B cell (primary cell): ENCODE measurements at regions of chr20 and their contacts with region 1.

Region 1: GRCh38 chr20:324177-325044 is 941 bp upstream of the SOX12 start:
- DNase-seq: peak; percentile 95
- ATAC-seq: peak; percentile 57
- H3K4me3 ChIP-seq: peak overlapping the region; percentile 58 to 95 (median 79)
- H3K4me3 Mint-ChIP-seq: peak overlapping the region; percentile 95
- H3K27ac ChIP-seq: peak overlapping the region; percentile 65 to 89
- H3K27ac Mint-ChIP-seq: peak overlapping the region; percentile 95
- H3K4me1 ChIP-seq: peaks cover 15 to 29% of the 10 kb centered on the region in 2 donors
- H3K4me1 Mint-ChIP-seq: peaks cover 26% of the 10 kb centered on the region
- H3K27me3 ChIP-seq: no peaks in the 10 kb centered on the region
- H3K27me3 Mint-ChIP-seq: no peaks in the 10 kb centered on the region
- CTCF ChIP-seq: peak; percentile 56

Region 2: DNA sequence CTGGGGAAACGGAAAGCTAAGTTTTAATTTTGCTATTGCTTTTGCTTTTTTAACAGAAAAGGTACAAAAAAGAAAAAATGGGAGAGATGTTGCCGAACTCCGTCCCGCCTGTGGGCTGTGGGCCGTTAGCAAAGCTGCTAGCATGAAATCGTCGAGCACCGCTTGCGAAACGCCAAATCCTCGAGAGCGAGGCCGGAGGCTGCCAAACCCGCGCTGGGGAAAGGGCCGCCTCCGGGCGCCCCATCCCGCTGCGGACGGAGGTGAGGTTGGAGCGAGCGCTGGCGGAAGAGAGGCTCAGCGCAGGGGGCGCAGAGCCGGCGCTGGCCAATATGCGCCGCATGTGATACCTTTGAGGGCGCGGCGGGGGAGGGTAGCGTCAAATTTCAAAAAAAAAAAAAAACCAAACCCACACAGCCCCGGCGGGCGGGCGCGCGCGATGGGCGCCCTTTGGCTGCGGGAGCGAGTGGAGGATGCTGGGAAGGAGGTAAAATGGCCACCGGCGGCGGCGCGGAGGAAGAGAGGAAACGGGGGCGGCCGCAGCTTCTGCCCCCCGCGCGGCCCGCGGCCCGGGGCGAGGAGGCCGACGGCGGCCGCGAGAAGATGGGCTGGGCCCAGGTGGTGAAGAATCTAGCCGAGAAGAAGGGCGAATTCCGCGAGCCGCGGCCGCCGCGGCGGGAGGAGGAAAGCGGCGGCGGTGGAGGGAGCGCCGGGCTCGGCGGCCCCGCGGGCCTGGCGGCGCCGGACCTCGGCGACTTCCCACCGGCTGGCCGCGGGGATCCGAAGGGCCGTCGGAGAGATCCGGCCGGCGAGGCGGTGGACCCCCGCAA is 27.1 kb before region 1 on chr20 and contains the start of gene ZCCHC3:
- CTCF ChIA-PET with region 1: interaction called, 58 read pairs
- POLR2A ChIA-PET with region 1: interaction called, 35 read pairs
- intact Hi-C with region 1: loop called (anchors 1 kb)
- DNase-seq: peak; percentile 94
- ATAC-seq: peak; percentile 86
- H3K4me3 ChIP-seq: peak within 1 kb of the TSS; percentile 84 to 94 (median 90)
- H3K4me3 Mint-ChIP-seq: peak within 1 kb of the TSS; percentile 99
- H3K27ac ChIP-seq: peak within 1 kb of the TSS; percentile 85 to 88
- H3K27ac Mint-ChIP-seq: peak within 1 kb of the TSS; percentile 100
- H3K4me1 ChIP-seq: peaks cover 16 to 27% of the 10 kb centered on the region in 2 donors
- H3K4me1 Mint-ChIP-seq: peaks cover 40% of the 10 kb centered on the region
- H3K27me3 ChIP-seq: no peaks in the 10 kb centered on the region
- H3K27me3 Mint-ChIP-seq: no peaks in the 10 kb centered on the region
- CTCF ChIP-seq: peak; percentile 19
- total RNA-seq, gene ZCCHC3: 34.5 and 35.7 TPM in 2 replicates

Region 3: DNA sequence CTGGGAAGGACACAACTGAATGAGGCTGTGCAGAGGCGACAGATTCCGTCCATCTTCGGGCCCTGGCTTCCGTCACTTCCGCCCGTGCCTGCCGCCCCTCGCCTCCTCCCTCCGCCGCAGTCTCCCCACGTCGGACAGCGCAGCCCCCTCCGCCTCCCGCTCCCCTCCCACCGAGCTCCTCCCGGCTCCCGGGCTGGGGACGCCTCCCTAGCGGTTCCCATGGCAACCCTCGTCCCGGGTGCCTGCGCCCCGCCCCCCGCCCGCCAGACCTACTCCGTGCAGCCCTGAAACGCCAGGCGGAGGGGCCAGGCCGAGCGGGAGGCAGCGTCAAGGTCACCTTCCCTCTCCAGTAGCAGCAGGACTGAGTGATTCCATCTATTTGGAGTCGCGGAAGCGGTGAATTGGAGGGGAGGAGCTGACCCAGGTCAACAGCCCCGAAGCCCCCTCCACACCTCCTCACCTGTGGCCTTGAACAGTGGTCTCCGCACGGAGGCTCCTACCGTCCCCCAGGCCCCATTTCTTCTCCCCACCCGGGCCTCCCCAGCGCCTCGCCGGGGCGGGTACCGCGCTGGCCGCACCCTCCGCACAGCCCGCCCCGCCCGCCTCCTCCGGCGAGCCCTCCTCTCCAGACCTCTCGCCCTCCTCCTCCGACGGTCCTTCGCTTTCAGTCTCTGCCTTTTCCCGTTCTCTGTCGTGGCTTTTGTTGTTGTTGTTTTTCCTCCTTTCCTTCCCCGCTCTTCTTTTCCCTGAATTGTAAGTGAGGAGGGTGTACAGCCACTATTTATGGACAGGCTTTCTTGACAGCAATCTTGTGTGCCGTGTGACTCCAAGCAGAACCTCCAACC is 23.5 kb after region 1 on chr20:
- CTCF ChIA-PET with region 1: interaction called, 47 read pairs
- POLR2A ChIA-PET with region 1: no interaction called
- intact Hi-C with region 1: loop called (anchors 1 kb)
- DNase-seq: peak; percentile 78
- ATAC-seq: peak; percentile 84
- H3K4me3 ChIP-seq: peak overlapping the region; percentile 27 to 92 (median 79)
- H3K4me3 Mint-ChIP-seq: peak overlapping the region; percentile 97
- H3K27ac ChIP-seq: peak overlapping the region; percentile 58 to 74
- H3K27ac Mint-ChIP-seq: peak overlapping the region; percentile 92
- H3K4me1 ChIP-seq: peaks cover 10 to 19% of the 10 kb centered on the region in 2 donors
- H3K4me1 Mint-ChIP-seq: peaks cover 13% of the 10 kb centered on the region
- H3K27me3 ChIP-seq: no peaks in the 10 kb centered on the region
- H3K27me3 Mint-ChIP-seq: no peaks in the 10 kb centered on the region
- CTCF ChIP-seq: no peak

Region 4: DNA sequence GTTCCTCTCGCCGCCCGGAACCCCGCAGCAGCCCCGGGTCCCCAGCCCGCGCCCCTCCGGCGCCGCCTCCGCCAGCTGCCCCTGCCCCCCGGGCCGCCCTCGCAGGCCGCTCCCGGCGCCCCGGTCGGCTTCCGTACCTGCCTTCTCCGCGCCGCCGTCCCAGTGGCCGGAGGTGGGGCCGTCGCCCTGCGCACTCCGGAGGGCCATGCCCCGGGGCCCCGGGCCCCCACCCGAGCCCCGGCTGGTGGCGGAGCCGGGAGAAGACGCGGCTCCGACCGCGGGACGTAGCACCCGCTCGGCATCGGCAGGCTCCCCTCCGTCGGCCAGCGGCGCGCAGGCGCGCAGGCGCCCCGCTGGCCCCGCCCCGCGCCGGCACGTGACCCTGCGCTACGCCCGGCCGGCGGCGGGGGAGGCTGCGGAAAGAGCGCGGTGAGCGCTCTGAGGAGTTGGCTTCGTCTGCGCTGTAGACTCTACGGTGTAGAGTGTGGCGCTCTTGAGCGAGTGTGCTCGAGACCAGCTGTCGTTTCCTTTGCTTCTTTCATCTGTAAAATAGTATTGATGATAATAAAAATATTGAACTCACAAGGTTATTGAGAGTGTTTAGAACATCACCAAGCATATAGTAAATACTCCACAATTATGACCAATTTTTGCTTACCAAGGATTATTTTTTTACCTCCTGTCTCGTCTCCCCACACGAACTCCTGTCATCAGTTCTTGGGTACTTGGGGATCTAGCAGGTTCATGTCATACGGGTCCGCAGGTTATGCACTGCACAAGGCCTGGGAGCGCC is 138.0 kb after region 1 on chr20 and contains the start of gene TBC1D20:
- CTCF ChIA-PET with region 1: no interaction called
- POLR2A ChIA-PET with region 1: no interaction called
- intact Hi-C with region 1: loop called (anchors 1 kb)
- DNase-seq: peak; percentile 94
- ATAC-seq: peak; percentile 95
- H3K4me3 ChIP-seq: peak within 1 kb of the TSS; percentile 58 to 83 (median 76)
- H3K4me3 Mint-ChIP-seq: peak within 1 kb of the TSS; percentile 94
- H3K27ac ChIP-seq: peak within 1 kb of the TSS; percentile 61 to 85
- H3K27ac Mint-ChIP-seq: peak within 1 kb of the TSS; percentile 95
- H3K4me1 ChIP-seq: peaks cover 14 to 17% of the 10 kb centered on the region in 2 donors
- H3K4me1 Mint-ChIP-seq: peaks cover 37% of the 10 kb centered on the region
- H3K27me3 ChIP-seq: peaks cover 0 to 1% (median 0%) of the 10 kb centered on the region in 4 experiments
- H3K27me3 Mint-ChIP-seq: peaks cover 3% of the 10 kb centered on the region
- CTCF ChIP-seq: no peak
- total RNA-seq, gene TBC1D20: 37.9 and 40.0 TPM in 2 replicates

Region 5: GRCh38 chr20:2162125-2162822 is 1837.9 kb after region 1 on chr20:
- CTCF ChIA-PET with region 1: no interaction called
- POLR2A ChIA-PET with region 1: no interaction called
- intact Hi-C with region 1: no loop called
- DNase-seq: no peak
- ATAC-seq: no peak
- H3K4me3 ChIP-seq: no peak overlapping the region
- H3K4me3 Mint-ChIP-seq: no peak overlapping the region
- H3K27ac ChIP-seq: no peak overlapping the region
- H3K27ac Mint-ChIP-seq: no peak overlapping the region
- H3K4me1 ChIP-seq: no peaks in the 10 kb centered on the region
- H3K4me1 Mint-ChIP-seq: no peaks in the 10 kb centered on the region
- H3K27me3 ChIP-seq: no peaks in the 10 kb centered on the region
- H3K27me3 Mint-ChIP-seq: peaks cover 10% of the 10 kb centered on the region
- CTCF ChIP-seq: no peak